Heart left ventricle (tissue), 16 donors: ENCODE measurements at regions of chr1 and their contacts with region 1.

Region 1: DNA sequence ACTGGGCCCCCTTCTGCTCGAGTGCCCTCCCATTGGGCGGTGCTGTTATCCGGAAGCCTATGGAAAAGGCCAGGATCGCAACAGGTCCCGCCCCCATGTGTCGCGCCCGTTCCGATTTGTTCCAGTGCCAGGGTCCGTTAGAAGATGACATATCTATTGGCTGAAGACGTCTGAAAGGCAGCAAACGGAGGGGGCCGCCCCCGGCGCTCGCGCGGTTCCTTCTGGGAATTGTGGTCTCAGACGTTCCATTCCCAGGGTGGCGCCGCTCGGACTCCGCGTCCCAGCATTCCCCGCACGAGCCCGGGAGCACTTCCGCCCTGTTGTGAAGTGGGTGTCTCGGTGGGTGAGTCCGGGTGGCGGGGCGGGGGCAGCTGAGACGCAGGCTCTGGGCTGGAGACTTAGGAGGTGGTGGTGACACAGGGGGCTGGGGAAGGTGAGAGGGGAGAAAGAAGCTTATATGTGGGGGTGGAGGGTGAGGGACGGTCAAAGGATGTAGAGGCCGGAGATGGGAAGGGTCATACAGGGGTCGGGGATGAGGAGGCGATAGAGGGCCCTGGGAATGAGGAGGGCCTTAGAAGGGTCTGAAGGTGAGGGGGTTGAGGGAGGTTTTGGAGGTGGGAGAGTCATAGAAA is at the start of gene ZSCAN20:
- DNase-seq: peak; percentile 98 to 99 (median 98)
- ATAC-seq: peak; percentile 90 to 94 (median 94)
- H3K4me3 ChIP-seq: peak within 1 kb of the TSS; percentile 42 to 74 (median 67)
- H3K27ac ChIP-seq: peak within 1 kb of the TSS; percentile 76 to 90 (median 86)
- H3K4me1 ChIP-seq: peaks cover 3 to 50% (median 34%) of the 10 kb centered on the region in 12 donors
- H3K27me3 ChIP-seq: no peaks in the 10 kb centered on the region
- CTCF ChIP-seq: no peak
- POLR2A ChIP-seq: peak in 1 of 2 donors; percentile 48
- total RNA-seq, gene ZSCAN20: 3.3 to 8.8 (median 6.4) TPM

Region 2: DNA sequence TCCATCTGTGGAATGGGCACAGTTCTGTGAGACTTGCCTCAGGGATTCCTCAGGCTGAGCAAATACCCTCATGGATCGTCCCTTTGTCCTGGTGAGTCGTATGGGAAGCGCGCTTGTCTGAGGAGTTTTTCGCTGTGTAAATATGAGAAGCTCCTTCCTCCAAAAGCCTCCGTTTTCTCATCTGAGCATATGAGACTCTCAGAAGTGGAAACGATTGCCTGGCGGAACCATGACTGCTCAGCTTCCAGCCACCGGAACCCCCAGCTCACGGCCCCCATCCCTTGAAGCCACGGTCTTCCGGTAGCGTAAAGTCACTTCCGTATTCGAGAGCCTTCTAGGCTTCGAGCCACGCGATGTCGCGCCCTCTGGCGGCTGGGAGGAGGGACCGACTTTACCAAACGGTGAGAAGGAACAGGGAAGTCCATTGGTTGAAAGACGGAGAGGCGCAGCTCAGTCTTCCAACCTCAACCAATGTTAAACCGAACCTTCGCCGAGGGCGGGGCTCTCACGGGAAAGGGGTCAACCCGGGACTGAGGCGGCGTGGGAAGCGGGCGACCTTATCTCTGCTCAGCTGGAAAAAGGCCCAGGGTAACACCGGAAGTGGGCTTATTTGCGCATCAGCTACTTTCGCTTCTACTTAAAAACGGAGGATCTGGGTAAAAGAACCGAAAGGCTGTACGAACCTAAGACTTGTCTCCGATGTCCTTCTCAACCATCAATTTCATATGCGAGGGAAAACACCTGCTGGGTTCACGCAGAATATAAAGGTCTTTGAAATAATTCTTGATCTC is 345.3 kb before region 1 on chr1:
- intact Hi-C with region 1: loop called in 5 of 10 experiments (anchors 10 kb)
- DNase-seq: peak; percentile 98 to 99 (median 99)
- ATAC-seq: peak; percentile 98 to 99 (median 98)
- H3K4me3 ChIP-seq: peak overlapping the region; percentile 30 to 93 (median 76)
- H3K27ac ChIP-seq: peak overlapping the region; percentile 72 to 92 (median 84)
- H3K4me1 ChIP-seq: peaks cover 2 to 28% (median 18%) of the 10 kb centered on the region in 12 donors
- H3K27me3 ChIP-seq: no peaks in the 10 kb centered on the region
- CTCF ChIP-seq: peak; percentile 83 to 99 (median 93)
- POLR2A ChIP-seq: peak in 1 of 2 donors; percentile 64

Region 3: DNA sequence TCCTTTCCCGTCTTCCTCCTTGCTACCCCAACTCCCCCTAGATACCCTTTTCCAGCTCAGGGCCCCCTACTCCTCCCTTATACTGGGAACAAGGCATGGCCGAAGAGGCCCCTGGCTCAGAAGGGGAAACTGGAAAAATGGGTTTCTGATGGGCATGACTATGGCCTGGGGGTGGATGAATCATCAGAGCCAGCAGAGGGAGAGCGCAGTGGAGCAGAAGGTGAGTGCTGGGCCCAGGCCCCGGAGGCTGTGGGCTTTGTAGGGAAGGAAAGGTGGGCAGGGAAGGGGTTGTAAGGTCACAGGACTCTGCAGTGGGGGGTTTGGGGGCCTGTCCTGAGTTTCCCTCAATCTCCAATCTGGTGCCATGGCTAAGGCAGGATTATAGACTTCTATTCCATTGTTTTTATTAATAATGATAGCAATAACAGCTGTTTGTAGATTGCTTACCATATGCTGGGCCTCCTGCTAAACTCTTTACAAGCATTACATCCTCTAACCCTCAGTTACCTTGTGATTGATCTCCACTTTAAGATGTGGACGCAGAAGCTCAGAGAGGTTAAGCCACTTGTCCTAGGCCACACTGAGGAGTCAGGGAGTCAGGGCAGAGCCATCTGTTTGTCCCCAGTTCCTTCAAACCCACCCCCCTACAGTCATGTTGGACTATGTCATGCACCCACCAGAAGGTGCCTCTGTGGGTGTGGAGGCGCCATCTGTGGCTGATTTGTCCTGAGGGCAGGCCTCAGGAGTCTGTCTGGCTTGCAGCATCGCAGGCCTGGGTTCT is 252.4 kb before region 1 on chr1:
- intact Hi-C with region 1: loop called in 4 of 10 experiments (anchors 5 to 10 kb)
- DNase-seq: no peak
- ATAC-seq: peak in 2 of 4 donors; percentile 16 to 44
- H3K4me3 ChIP-seq: no peak overlapping the region
- H3K27ac ChIP-seq: peak overlapping the region in 1 of 12 donors; percentile 16
- H3K4me1 ChIP-seq: peaks cover 0 to 26% (median 0%) of the 10 kb centered on the region in 12 donors
- H3K27me3 ChIP-seq: no peaks in the 10 kb centered on the region
- CTCF ChIP-seq: no peak
- POLR2A ChIP-seq: no peak

Region 4: DNA sequence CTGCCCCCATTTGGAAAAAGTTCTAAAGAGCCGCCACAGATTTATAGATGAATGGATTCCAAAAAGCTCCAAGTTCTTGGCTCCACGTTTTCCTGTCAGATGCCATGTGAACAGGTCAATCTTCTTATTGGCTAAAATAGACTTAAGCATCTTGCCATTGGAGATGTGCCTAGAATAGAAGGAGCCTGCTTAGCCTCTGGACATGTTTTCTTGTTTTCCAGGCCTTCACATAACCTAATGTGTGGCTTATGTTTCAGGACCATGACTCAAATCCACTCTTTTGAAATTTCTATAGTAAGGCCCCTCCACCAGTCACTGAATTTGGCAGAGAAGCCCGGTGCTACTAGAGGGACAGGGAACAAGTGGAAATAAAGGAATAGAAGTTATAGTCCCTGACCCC is 73.1 kb before region 1 on chr1:
- intact Hi-C with region 1: no loop called
- DNase-seq: no peak
- ATAC-seq: peak in 3 of 4 donors; percentile 31 to 43 (median 41)
- H3K4me3 ChIP-seq: no peak overlapping the region
- H3K27ac ChIP-seq: peak overlapping the region; percentile 30 to 87 (median 66)
- H3K4me1 ChIP-seq: peaks cover 0 to 50% (median 11%) of the 10 kb centered on the region in 12 donors
- H3K27me3 ChIP-seq: no peaks in the 10 kb centered on the region
- CTCF ChIP-seq: no peak
- POLR2A ChIP-seq: no peak

Region 5: DNA sequence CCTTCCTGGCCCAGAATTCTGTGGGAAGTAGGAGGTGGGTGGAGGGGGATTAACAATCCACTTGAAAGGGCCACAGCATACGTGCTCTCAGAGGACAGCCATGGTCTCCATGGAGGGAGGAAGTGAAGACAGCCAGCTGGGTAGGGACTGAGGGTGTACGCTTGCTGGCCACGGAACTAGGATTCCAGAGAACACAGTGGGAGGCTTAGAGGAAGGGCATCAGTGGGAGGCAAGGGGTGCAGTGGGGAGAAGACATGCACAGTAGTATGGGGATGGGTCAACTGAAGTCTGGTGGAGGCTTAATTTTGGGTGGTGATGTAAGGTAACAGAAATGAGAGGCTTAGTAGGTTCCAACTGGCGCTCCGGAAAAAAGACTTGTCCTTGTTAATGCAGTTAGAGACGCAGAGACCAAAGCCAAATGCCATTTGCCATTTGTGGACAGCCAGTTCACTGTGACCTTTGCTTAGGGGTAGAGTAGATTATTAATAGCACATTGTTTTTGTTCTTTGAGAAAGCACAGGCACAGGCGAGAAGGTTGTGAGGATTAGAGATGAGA is 102.9 kb after region 1 on chr1:
- intact Hi-C with region 1: loop called in 4 of 10 experiments (anchors 2 to 5 kb)
- DNase-seq: peak in 4 of 5 donors; percentile 65 to 80 (median 70)
- ATAC-seq: peak; percentile 91 to 93 (median 92)
- H3K4me3 ChIP-seq: peak overlapping the region in 1 of 12 donors; percentile 7
- H3K27ac ChIP-seq: peak overlapping the region; percentile 77 to 98 (median 90)
- H3K4me1 ChIP-seq: peaks cover 6 to 76% (median 41%) of the 10 kb centered on the region in 12 donors
- H3K27me3 ChIP-seq: no peaks in the 10 kb centered on the region
- CTCF ChIP-seq: no peak
- POLR2A ChIP-seq: no peak

Region 6: DNA sequence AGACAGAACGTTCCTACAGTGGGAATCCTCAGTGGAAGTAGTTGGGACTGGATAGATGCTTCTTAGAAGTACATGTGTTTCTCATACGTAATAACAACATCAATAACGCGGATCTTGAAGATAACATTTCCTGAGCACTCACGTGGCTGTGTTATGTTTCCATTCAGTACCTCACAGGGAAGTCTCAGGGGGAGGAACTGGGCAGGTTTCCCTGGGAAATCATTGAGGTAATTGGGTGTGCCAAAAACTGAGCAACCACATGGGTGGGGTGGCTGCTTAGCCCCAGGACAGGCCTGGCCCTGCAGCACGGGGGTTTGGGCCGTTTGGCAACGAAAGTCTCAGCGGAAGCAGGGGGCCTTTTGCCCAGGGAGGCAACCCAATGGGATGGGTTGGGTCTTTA is 133.8 kb after region 1 on chr1:
- intact Hi-C with region 1: loop called in 7 of 10 experiments (anchors 2 to 5 kb)
- DNase-seq: peak in 4 of 5 donors; percentile 62 to 77 (median 73)
- ATAC-seq: peak; percentile 70 to 88 (median 76)
- H3K4me3 ChIP-seq: no peak overlapping the region
- H3K27ac ChIP-seq: peak overlapping the region in 9 of 12 donors; percentile 34 to 88 (median 76)
- H3K4me1 ChIP-seq: peaks cover 0 to 35% (median 8%) of the 10 kb centered on the region in 12 donors
- H3K27me3 ChIP-seq: no peaks in the 10 kb centered on the region
- CTCF ChIP-seq: no peak
- POLR2A ChIP-seq: no peak

Region 7: GRCh38 chr1:33849211-33849610 is 376.7 kb after region 1 on chr1:
- intact Hi-C with region 1: no loop called
- DNase-seq: no peak
- ATAC-seq: no peak
- H3K4me3 ChIP-seq: no peak overlapping the region
- H3K27ac ChIP-seq: no peak overlapping the region
- H3K4me1 ChIP-seq: no peaks in the 10 kb centered on the region
- H3K27me3 ChIP-seq: peaks cover 0 to 3% (median 0%) of the 10 kb centered on the region in 9 donors
- CTCF ChIP-seq: no peak
- POLR2A ChIP-seq: no peak